Motor neuron (in vitro differentiated cells): ENCODE measurements at regions of chr3 and their contacts with region 1.

Region 1: GRCh38 chr3:47799733-47800132 is 3.2 kb upstream of the DHX30 start:
- ATAC-seq: no peak
- H3K4me3 ChIP-seq: no peak overlapping the region
- H3K27ac ChIP-seq: no peak overlapping the region
- H3K4me1 ChIP-seq: peaks cover 8 to 14% of the 10 kb centered on the region in 2 donors

Region 2: DNA sequence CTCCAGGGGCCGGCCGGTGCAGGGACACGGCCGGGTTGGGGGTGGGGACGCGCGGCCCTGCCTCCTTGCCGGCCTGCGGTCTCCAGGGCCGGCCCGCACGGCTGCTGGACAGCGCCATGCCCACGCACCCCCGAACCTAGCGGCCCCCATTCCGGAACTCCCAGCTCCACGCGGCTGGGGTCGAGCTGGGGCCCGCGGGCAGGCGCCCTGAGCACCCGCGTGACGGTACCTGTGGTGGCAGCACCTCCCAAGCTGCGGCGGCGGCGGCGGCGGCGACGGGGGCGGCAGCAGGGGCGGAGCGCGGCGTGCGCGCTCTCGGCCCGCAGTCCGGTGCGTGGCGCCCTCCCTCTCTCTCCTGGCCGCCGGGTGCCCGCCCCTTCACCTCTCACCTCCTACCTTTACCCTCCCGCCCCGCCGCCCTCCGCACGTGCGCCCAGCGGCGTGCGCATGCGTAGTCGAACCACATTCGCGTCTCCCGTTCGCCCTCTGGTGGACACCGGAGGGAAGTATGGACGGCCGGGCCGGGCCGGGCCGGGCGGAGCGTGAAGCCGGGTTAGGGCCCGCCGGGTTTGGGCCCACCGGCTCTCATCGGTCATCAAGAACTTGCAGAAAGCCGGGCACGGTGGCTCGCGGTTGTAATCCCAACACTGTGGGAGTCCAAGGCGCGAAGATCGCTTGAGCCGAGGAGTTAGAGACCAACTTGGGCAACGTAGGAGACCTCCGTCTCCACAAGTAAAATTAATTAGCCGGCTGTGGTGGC is 324.0 kb before region 1 on chr3 and contains the start of gene SCAP:
- in situ Hi-C with region 1: no loop called
- ATAC-seq: peak; percentile 79 to 93 (median 88)
- H3K4me3 ChIP-seq: peak within 1 kb of the TSS; percentile 49 to 68 (median 60)
- H3K27ac ChIP-seq: peak within 1 kb of the TSS; percentile 47 to 74
- H3K4me1 ChIP-seq: peaks cover 3 to 12% of the 10 kb centered on the region in 2 donors
- total RNA-seq, gene SCAP: 37.3 to 75.9 (median 48.8) TPM

Region 3: DNA sequence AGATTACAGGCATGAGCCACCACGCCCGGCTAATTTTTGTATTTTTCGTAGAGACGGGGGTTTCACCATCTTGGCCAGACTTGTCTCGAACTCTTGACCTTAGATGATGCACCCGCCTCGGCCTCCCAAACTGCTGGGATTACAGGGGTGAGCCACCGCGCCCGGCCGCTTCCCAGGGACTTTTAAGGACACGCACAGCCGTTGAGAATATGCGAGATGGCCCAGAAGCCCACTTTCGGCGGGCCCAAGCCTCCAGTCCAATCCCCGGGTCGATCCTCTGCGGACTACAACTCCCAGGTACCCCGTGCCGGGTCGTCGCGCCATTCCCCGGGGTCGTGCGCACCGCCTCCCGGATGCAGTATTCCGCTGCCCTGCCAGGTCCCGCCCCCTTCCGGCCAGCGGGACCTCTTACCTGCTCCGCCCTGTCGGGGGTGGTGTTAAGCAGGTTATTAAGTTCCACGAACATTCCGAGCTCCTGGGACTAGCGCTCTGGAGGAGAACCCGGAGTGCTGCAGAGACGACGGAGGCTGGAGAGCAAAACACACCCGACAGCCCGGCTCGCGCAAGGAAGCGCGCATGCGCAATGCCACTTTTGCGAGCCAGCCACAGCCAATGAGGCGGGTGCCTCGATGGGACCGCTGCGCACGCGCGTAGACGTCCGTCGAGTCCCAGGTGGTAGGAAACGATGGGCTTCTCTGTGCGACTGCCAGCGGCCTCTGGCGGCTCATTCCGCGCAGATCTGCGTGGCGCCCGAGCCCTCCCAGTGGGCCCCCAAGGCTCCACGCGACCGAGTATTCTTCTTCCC is 286.4 kb before region 1 on chr3 and contains the start of gene ELP6:
- in situ Hi-C with region 1: loop called in 4 of 9 experiments (anchors 10 to 25 kb)
- ATAC-seq: peak; percentile 94 to 98 (median 94)
- H3K4me3 ChIP-seq: peak within 1 kb of the TSS; percentile 48 to 67 (median 49)
- H3K27ac ChIP-seq: peak within 1 kb of the TSS; percentile 98
- H3K4me1 ChIP-seq: peaks cover 9 to 10% of the 10 kb centered on the region in 2 donors
- total RNA-seq, gene ELP6: 23.6 to 50.6 (median 37.8) TPM

Region 4: DNA sequence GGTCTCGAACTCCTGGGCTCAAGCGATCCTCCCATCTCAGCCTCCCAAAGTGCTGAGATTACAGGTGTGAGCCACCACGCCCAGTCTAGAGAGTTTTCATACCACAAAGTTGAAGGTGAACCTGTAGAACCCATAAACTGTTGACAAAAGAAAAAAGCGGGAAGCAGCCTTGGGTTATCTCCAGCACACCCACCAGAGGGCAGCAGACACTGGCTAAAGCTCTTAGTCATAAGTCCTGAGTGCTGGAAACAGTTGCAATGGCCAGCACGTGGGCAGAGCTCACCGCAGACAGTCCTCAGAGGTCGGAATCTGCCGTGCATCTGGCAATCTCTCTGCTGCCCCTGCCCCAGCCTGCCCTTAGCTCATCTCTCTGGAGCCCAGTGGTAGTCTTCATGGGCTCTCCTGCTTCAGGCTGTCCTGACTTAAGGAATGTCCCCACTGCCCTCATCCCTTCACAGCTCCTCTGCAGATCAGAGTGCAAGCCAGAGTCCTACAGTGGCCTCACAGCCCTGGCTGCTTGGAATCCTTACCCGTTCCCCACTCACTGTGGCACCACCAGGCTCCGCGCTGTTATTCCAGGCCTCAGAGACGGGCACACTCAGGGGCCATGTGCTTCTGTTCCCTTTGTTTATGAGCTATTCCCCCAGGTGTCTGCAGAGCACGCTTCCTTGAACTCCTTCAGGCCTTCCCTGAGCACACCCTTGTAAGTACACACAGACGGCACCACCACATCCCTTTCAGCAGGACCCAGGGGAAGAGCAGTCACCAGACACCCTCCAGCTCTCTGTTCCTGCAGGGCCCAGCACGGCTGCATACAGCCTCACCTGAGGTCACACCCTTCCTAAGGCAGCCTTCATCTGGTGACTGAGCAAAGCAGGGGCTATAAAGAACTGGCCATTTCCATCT is 277.4 kb before region 1 on chr3:
- in situ Hi-C with region 1: loop called in 7 of 9 experiments (anchors 10 to 25 kb)
- ATAC-seq: peak; percentile 94 to 99 (median 98)
- H3K4me3 ChIP-seq: no peak overlapping the region
- H3K27ac ChIP-seq: no peak overlapping the region
- H3K4me1 ChIP-seq: peaks cover 4 to 10% of the 10 kb centered on the region in 2 donors